CD8-positive, alpha-beta T cell (primary cell): ENCODE measurements at regions of chr18 and their contacts with region 1.

Region 1: GRCh38 chr18:49435170-49435569 is 25.3 kb downstream of the DYM start:
- DNase-seq: no peak
- ATAC-seq: no peak
- H3K4me3 ChIP-seq: no peak overlapping the region
- H3K4me3 Mint-ChIP-seq: no peak overlapping the region
- H3K27ac ChIP-seq: no peak overlapping the region
- H3K27ac Mint-ChIP-seq: no peak overlapping the region
- H3K4me1 ChIP-seq: peaks cover 6% of the 10 kb centered on the region
- H3K4me1 Mint-ChIP-seq: peaks cover 42% of the 10 kb centered on the region
- H3K27me3 ChIP-seq: no peaks in the 10 kb centered on the region
- H3K27me3 Mint-ChIP-seq: no peaks in the 10 kb centered on the region
- CTCF ChIP-seq: no peak

Region 2: GRCh38 chr18:49399003-49399402 is 36.2 kb before region 1 on chr18:
- CTCF ChIA-PET with region 1: no interaction called
- POLR2A ChIA-PET with region 1: no interaction called
- intact Hi-C with region 1: loop called in 1 of 2 experiments (anchors 5 kb)
- DNase-seq: peak in 1 of 9 experiments; percentile 7
- ATAC-seq: no peak
- H3K4me3 ChIP-seq: no peak overlapping the region
- H3K4me3 Mint-ChIP-seq: no peak overlapping the region
- H3K27ac ChIP-seq: no peak overlapping the region
- H3K27ac Mint-ChIP-seq: peak overlapping the region; percentile 28
- H3K4me1 ChIP-seq: peaks cover 30% of the 10 kb centered on the region
- H3K4me1 Mint-ChIP-seq: peaks cover 47% of the 10 kb centered on the region
- H3K27me3 ChIP-seq: no peaks in the 10 kb centered on the region
- H3K27me3 Mint-ChIP-seq: no peaks in the 10 kb centered on the region
- CTCF ChIP-seq: no peak